HCT116 (cell line): ENCODE measurements at regions of chr5 and their contacts with region 1.

Region 1: GRCh38 chr5:177446200-177447065 is at the start of gene PRR7:
- DNase-seq: no peak
- ATAC-seq: peak; percentile 44
- H3K4me3 ChIP-seq: peak within 1 kb of the TSS; percentile 55 to 86
- H3K27ac ChIP-seq: peak within 1 kb of the TSS; percentile 95
- H3K4me1 ChIP-seq: peaks cover 9 to 56% of the 10 kb centered on the region in 2 experiments
- H3K27me3 ChIP-seq: no peaks in the 10 kb centered on the region
- CTCF ChIP-seq: no peak
- POLR2A ChIP-seq: no peak
- RAD21 ChIP-seq: no peak
- total RNA-seq, gene PRR7: 39.9 TPM

Region 2: GRCh38 chr5:177403792-177404640 is 42.4 kb before region 1 on chr5:
- CTCF ChIA-PET with region 1: interaction called, 85 read pairs
- POLR2A ChIA-PET with region 1: interaction called, 5 read pairs
- RAD21 ChIA-PET with region 1: interaction called, 3 to 5 read pairs
- intact Hi-C with region 1: no loop called
- DNase-seq: peak; percentile 56
- ATAC-seq: peak; percentile 72
- H3K4me3 ChIP-seq: peak overlapping the region; percentile 69 to 82
- H3K27ac ChIP-seq: peak overlapping the region; percentile 99
- H3K4me1 ChIP-seq: peaks cover 15 to 37% of the 10 kb centered on the region in 2 experiments
- H3K27me3 ChIP-seq: no peaks in the 10 kb centered on the region
- CTCF ChIP-seq: peak in 2 of 3 experiments; percentile 55 to 69; a peak in 4 of 6 replicates
- POLR2A ChIP-seq: no peak
- RAD21 ChIP-seq: no peak

Region 3: DNA sequence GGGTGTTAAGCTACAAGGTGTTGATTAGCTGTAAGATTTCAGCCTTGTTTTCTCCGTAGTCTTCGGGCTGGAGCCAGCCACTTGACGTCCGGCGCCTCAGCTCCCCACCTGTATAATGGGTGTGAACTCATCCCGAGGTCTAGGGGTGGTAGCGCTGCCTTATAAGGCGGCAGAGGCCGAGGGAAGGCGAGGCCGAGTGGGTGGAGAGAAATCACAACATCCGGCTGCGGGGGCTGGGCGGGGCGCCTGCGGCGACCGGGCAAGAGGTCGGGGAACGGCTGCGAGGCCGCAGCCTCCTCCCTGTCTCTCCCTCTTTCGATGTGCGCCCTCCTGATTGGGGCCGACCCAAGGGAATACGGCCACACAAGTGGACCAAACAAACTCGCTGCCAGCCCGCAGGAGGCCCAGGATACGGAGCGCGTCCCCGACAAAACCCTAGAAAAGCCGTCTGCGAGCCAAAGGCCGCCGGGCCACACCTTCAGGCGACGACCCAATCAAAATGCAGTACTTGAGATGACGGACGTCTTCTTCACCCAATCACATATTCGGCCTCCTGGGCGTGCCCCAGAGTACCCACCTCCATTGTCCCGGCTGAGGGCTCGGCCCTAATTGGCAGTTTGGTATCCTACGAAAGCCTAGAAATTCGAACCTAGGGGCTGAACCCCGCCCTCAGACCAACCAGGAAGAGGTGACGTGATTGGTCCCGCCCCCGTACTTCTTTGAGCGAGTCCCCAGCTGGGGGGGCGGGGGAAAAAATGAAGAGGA is 20.4 kb before region 1 on chr5:
- CTCF ChIA-PET with region 1: interaction called, 5 read pairs
- POLR2A ChIA-PET with region 1: interaction called, 10 read pairs
- RAD21 ChIA-PET with region 1: no interaction called
- intact Hi-C with region 1: no loop called
- DNase-seq: peak; percentile 100
- ATAC-seq: peak; percentile 90
- H3K4me3 ChIP-seq: peak overlapping the region; percentile 45 to 62
- H3K27ac ChIP-seq: peak overlapping the region; percentile 63
- H3K4me1 ChIP-seq: peaks cover 15 to 28% of the 10 kb centered on the region in 2 experiments
- H3K27me3 ChIP-seq: no peaks in the 10 kb centered on the region
- CTCF ChIP-seq: no peak
- POLR2A ChIP-seq: peak; percentile 42
- RAD21 ChIP-seq: no peak